Right ventricle myocardium inferior (tissue), 1 donor: ENCODE measurements at regions of chr15 and their contacts with region 1.

Region 1: DNA sequence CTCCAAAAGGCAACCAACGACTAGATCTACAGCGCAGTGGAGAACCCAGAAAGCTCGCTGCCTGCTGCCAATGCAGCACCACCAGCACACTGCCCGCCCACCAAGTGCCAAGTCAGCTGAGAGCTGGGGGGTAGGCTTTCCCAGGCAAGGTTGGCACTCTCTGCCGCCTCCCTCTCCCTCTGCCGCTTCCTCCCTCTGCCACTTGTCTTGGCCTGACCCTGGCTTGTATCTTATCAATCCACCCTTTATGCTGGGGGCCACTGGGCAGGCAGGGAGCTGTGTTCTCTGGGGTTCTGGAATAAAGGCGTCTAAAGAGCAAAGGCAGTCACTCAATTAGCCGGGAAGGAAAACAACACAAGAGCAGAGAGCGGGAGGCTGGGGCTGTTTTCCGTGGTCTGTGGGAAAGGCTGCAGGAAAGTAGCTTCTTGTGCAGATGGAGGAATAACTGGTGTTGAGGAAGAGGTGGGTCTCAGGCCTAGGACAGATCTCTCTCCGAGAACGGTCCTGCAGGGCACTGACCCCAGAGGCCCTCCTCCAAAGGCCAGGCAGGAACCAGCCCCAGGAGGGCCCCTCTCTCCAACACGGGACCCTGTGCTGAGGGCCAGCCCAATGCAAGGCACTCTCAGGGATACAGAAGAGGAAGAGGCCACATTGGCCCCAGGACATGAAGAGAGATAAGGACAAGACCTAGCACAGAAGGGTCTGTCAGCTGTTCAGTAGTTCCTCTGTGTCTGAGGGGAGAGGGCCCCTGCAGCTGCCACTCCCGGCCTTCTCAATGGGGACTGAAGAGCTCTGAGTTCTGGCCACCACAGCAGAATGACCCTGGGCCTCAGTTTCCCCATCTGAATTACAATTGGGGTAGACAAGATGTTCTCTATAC is 30.8 kb downstream of the ACSBG1 start:
- DNase-seq: no peak
- ATAC-seq: peak; percentile 64

Region 2: DNA sequence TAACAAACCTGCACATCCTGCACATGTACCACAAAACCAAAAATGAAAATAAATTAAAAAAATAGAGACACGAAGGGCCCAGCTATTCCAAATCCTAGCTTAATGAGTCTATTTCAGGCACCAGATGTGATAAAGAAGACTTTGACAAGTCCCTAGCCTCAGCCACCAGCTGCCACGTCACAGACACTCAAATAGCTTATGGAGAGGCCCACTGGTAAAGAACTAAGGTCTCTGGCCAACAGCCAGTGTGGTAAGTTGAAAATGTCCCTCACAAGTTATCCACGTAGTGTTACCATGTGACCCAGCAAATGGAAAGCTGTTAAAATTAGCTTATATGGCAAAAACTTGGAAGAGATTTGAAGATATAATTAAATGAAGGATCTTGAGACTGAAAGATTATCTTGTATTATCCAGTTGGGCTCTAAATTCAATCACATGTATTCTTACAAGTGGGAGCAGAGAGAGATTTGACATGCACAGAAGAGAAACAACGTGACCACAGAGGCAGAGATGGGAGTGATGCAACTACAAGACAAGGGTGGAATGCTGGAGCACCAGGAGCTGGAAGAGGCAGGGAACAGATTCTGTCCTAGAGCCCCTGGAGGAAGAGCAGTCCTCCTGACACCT is 19.9 kb after region 1 on chr15:
- intact Hi-C with region 1: loop called (anchors 2 kb)
- DNase-seq: no peak
- ATAC-seq: peak; percentile 86